Calu3 (cell line): ENCODE measurements at regions of chr3 and their contacts with region 1.

Region 1: DNA sequence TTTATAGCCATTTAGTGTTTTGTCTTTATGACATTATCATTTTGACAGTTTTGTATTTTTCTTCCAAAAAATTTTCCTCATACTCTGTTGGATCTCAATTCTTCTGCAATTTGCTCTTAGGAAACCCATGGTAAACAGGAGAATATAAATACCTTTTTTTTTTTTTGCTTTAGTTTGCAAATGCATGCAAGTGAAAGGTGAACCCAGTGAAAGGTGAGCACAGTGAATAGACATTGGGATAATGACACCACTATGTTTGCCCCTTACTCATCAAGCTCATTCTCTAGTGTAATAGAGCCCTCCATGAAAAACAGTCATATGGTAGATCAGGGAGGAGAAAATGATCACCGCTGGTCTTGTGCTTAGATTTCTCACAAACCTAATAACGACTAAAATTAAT is 59.0 kb upstream of the TRPC1 start:
- DNase-seq: no peak
- H3K4me3 Mint-ChIP-seq: peak overlapping the region; percentile 57
- H3K27ac Mint-ChIP-seq: no peak overlapping the region
- H3K4me1 Mint-ChIP-seq: peaks cover 9% of the 10 kb centered on the region
- H3K27me3 Mint-ChIP-seq: no peaks in the 10 kb centered on the region
- CTCF ChIP-seq: no peak

Region 2: GRCh38 chr3:142279965-142280590 is 384.7 kb before region 1 on chr3:
- CTCF ChIA-PET with region 1: no interaction called
- intact Hi-C with region 1: no loop called
- DNase-seq: peak; percentile 64
- H3K4me3 Mint-ChIP-seq: no peak overlapping the region
- H3K27ac Mint-ChIP-seq: no peak overlapping the region
- H3K4me1 Mint-ChIP-seq: peaks cover 13% of the 10 kb centered on the region
- H3K27me3 Mint-ChIP-seq: no peaks in the 10 kb centered on the region
- CTCF ChIP-seq: peak; percentile 84

Region 3: GRCh38 chr3:142498397-142499180 is 166.2 kb before region 1 on chr3:
- CTCF ChIA-PET with region 1: no interaction called
- intact Hi-C with region 1: no loop called
- DNase-seq: no peak
- H3K4me3 Mint-ChIP-seq: no peak overlapping the region
- H3K27ac Mint-ChIP-seq: no peak overlapping the region
- H3K4me1 Mint-ChIP-seq: peaks cover 15% of the 10 kb centered on the region
- H3K27me3 Mint-ChIP-seq: no peaks in the 10 kb centered on the region
- CTCF ChIP-seq: no peak

Region 4: DNA sequence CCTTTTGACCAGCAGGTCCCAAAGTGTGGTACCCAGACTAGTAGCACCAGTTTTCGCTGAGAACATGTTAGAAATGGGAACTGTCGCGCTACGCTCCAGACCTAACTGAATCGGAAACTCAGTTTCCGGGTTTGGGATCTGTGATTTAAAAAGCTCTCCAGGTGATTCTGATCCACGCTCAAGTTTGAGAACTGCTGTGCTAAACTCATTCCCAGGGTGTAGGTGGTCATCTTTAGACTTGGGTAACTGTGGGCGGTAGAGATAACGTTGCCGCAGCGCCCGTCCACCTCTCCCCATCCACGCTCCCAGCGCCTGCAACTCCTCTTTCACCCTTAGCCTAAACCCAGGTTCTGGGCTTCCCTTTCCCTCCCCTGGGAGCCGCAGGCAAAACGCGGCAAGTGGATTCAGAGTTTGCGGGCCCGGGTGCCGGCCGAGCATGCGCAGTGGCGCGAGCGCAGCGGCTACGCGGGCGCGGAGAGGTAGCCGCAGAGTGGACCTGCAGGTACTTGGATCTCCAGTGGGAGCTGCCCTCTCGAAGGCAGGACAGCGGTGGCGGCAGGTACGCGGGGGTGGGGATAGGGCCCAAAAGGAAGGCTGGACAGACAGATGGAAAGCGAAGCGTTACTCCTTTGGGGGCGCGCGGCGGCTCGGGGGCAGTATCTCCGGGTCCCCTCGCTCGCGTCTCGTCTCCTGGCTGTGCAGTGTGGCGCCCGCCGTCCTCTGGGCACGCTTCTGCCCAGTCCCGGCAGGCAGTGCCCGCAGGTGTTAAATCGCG is 68.7 kb before region 1 on chr3 and contains the start of gene PLS1:
- CTCF ChIA-PET with region 1: interaction called, 5 read pairs
- intact Hi-C with region 1: loop called (anchors 1 kb)
- DNase-seq: peak; percentile 99
- H3K4me3 Mint-ChIP-seq: peak within 1 kb of the TSS; percentile 99
- H3K27ac Mint-ChIP-seq: peak within 1 kb of the TSS; percentile 84
- H3K4me1 Mint-ChIP-seq: peaks cover 37% of the 10 kb centered on the region
- H3K27me3 Mint-ChIP-seq: no peaks in the 10 kb centered on the region
- CTCF ChIP-seq: no peak
- total RNA-seq, gene PLS1: 155 and 165 TPM in 2 replicates

Region 5: DNA sequence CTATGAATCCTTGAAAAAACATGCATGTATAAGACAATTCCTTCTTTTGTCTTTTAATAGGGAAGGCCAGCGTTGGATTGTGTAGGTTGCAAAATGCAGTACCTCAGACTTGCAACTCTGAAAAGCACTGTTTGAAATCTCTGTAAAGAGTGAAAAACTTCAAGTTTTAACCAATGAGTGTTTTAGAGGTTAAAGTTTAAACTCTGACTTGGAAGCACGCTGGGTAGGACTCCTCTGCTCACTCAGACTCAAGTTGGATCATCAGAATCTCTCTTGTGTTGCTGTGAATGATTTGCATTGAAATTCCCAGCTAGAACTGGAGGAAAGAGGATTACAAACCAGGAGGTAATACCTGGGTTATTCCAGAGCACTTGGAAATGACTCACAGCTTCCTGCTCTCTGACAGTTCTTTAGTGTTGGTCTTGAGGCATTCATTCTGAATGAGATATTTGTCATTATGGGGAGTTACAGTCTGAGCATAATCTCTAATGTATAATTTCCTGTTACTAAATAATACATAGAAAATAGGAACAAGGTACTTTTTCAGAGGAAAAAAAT is 19.5 kb before region 1 on chr3:
- CTCF ChIA-PET with region 1: interaction called, 8 read pairs
- intact Hi-C with region 1: loop called (anchors 2 kb)
- DNase-seq: peak; percentile 47
- H3K4me3 Mint-ChIP-seq: no peak overlapping the region
- H3K27ac Mint-ChIP-seq: peak overlapping the region; percentile 1
- H3K4me1 Mint-ChIP-seq: peaks cover 63% of the 10 kb centered on the region
- H3K27me3 Mint-ChIP-seq: no peaks in the 10 kb centered on the region
- CTCF ChIP-seq: no peak

Region 6: DNA sequence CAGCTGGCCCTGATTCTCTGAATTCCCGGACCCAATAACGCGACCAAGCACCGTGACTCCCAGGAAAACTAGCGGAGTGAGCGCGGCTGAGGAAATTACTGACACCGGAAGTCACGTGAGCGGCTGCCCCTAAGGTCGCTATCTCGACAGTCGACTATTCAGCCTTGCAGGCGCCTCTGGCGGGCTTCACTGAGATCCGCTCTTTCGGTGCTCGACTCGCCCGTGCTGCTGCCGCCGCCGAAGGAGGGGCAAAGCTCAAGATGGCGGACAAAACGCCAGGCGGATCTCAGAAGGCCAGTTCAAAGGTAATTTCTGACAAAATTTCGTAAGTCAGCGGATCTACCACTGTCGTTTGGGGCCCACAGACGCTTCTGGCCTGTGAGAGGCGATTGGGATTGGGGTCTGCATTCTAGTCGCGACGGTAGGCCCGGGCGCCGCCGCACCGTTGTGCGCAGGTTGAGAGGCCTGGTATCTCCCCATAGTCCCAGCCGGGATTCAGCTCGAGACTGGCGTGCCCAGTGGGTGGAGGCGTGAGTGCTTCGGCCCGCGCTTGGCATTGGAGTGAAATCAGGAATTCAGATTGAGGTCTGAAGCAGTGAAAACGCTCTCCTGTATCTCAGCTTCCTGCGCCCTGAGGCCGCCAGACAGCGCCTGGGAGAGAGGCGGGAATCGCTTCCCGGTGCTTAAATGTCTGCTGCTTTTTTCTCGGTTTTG is 336.7 kb after region 1 on chr3 and contains the start of gene U2SURP:
- CTCF ChIA-PET with region 1: no interaction called
- intact Hi-C with region 1: loop called (anchors 10 kb)
- DNase-seq: peak; percentile 99
- H3K4me3 Mint-ChIP-seq: peak within 1 kb of the TSS; percentile 94
- H3K27ac Mint-ChIP-seq: peak within 1 kb of the TSS; percentile 96
- H3K4me1 Mint-ChIP-seq: peaks cover 57% of the 10 kb centered on the region
- H3K27me3 Mint-ChIP-seq: no peaks in the 10 kb centered on the region
- CTCF ChIP-seq: no peak
- total RNA-seq, gene U2SURP: 275 TPM in 2 replicates